ENCODE measurements at regions of chr6 and their contacts with region 1.

Region 1: DNA sequence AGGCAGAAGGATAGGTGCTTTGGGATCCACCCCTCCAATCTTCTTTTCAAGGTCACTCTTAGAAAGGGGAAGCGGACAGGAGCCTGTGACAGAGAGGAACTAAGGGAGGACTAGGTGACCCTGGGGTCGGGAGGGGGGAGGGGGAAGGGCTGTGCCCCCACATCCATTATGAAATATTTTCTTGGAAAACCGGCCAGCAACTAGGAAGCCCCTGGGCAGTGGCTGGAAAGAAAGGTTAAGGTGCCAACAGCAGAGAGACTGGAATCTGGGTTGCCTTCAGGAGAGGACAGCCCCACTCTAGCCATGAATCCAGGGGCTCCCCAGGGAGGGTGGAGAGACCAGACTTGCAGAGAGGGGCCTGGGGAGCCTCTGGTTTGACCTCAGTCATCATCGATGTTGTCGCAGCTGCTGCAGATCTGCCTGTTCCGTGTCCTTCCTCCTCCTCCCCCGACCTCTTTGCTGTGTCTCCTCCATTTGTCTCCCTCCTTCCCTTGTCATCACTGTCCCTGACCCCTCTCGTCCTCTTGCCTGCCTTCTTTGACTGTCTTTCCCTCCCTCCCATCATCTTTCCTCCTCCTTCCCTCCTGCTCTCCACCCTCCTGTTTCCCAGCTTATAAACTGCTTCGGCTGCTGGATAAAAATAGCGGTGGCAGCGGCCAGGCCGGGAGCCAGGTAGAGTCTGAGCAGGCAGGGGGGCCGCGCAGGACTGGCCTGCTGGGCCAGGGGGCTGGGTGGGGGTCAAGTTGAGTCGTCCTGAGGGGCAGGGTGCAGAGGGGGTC is 3.2 kb downstream of the SLC29A1 start:
- DNase-seq: no peak
- ATAC-seq: no peak
- H3K4me3 Mint-ChIP-seq: no peak overlapping the region
- H3K27ac Mint-ChIP-seq: no peak overlapping the region
- H3K4me1 Mint-ChIP-seq: peaks cover 36% of the 10 kb centered on the region
- H3K27me3 Mint-ChIP-seq: no peaks in the 10 kb centered on the region

Region 2: DNA sequence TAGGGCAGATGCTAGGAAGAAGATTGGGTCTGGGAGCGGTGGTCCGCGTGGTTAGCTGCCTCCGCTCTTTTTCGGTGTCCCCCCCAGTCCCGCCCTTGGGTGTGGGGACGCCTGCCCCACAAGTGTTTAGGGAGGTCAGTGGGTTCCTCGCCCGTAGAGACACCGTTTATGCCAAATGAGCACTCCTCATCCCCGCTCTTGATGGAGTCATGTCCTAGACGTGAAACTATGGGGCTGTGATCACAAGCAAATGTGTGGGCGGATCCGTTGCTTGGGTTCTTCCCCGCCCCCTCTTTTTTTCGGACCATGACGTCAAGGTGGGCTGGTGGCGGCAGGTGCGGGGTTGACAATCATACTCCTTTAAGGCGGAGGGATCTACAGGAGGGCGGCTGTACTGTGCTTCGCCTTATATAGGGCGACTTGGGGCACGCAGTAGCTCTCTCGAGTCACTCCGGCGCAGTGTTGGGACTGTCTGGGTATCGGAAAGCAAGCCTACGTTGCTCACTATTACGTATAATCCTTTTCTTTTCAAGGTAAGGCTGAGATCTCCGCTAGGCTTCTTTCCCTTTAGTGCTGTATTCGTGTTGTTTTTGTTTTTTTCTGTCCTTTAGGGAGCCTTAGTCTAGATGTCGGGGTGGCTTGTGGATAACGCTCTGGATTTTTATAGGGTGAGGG is 20.2 kb after region 1 on chr6 and contains the start of gene HSP90AB1:
- CTCF ChIA-PET with region 1: interaction called, 8 read pairs
- POLR2A ChIA-PET with region 1: interaction called, 37 read pairs
- DNase-seq: peak; percentile 97
- ATAC-seq: peak; percentile 80
- H3K4me3 Mint-ChIP-seq: peak within 1 kb of the TSS; percentile 98
- H3K27ac Mint-ChIP-seq: peak within 1 kb of the TSS; percentile 99
- H3K4me1 Mint-ChIP-seq: peaks cover 44% of the 10 kb centered on the region
- H3K27me3 Mint-ChIP-seq: no peaks in the 10 kb centered on the region
- total RNA-seq, gene HSP90AB1: 741 to 755 TPM

Measured in activated CD8-positive, alpha-beta T cell treated with anti-CD3 and anti-CD28 coated beads, Interleukin-2, amount 10 ng/mL, durations not matched to agents 7 days and 5 days (primary cell).